ENCODE measurements at regions of chrX and their contacts with region 1.

Region 1: GRCh38 chrX:103817502-103817901 is 14.6 kb downstream of the RAB9B start:
- DNase-seq: peak in 7 of 9 donors; percentile 33 to 62 (median 51)
- ATAC-seq: peak; percentile 77
- H3K4me3 ChIP-seq: no peak overlapping the region
- H3K4me3 Mint-ChIP-seq: no peak overlapping the region
- H3K27ac ChIP-seq: no peak overlapping the region
- H3K27ac Mint-ChIP-seq: no peak overlapping the region
- H3K4me1 ChIP-seq: no peaks in the 10 kb centered on the region
- H3K4me1 Mint-ChIP-seq: no peaks in the 10 kb centered on the region
- H3K27me3 ChIP-seq: no peaks in the 10 kb centered on the region
- H3K27me3 Mint-ChIP-seq: peaks cover 0 to 26% (median 8%) of the 10 kb centered on the region in 5 donors

Region 2: DNA sequence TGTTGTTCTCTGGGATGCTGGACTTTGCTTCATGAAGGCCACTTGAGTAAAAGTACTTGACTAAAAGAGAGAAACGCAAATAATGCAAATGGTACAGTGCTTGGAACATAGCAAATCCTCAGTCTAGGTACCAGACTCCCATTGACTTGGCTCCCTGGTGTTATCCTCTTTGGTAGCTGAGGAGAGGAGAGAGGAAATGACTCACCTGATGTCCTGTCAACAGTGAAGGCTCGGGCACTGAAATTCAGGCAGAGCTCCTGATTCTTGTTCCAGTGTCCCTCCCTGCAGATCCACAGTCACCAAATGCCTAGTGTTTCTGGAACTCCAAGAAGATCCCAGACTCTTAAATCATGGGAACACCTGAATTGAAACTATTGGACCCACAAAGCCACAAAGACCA is 254.7 kb before region 1 on chrX:
- CTCF ChIA-PET with region 1: no interaction called
- POLR2A ChIA-PET with region 1: no interaction called
- intact Hi-C with region 1: no loop called
- DNase-seq: no peak
- ATAC-seq: no peak
- H3K4me3 ChIP-seq: no peak overlapping the region
- H3K4me3 Mint-ChIP-seq: no peak overlapping the region
- H3K27ac ChIP-seq: no peak overlapping the region
- H3K27ac Mint-ChIP-seq: no peak overlapping the region
- H3K4me1 ChIP-seq: no peaks in the 10 kb centered on the region
- H3K4me1 Mint-ChIP-seq: no peaks in the 10 kb centered on the region
- H3K27me3 ChIP-seq: no peaks in the 10 kb centered on the region
- H3K27me3 Mint-ChIP-seq: peaks cover 0 to 9% (median 4%) of the 10 kb centered on the region in 5 donors

Region 3: GRCh38 chrX:103573208-103573607 is 244.3 kb before region 1 on chrX:
- CTCF ChIA-PET with region 1: no interaction called
- POLR2A ChIA-PET with region 1: no interaction called
- intact Hi-C with region 1: no loop called
- DNase-seq: no peak
- ATAC-seq: no peak
- H3K4me3 ChIP-seq: no peak overlapping the region
- H3K4me3 Mint-ChIP-seq: no peak overlapping the region
- H3K27ac ChIP-seq: no peak overlapping the region
- H3K27ac Mint-ChIP-seq: no peak overlapping the region
- H3K4me1 ChIP-seq: no peaks in the 10 kb centered on the region
- H3K4me1 Mint-ChIP-seq: no peaks in the 10 kb centered on the region
- H3K27me3 ChIP-seq: no peaks in the 10 kb centered on the region
- H3K27me3 Mint-ChIP-seq: peaks cover 0 to 13% (median 3%) of the 10 kb centered on the region in 5 donors

Region 4: DNA sequence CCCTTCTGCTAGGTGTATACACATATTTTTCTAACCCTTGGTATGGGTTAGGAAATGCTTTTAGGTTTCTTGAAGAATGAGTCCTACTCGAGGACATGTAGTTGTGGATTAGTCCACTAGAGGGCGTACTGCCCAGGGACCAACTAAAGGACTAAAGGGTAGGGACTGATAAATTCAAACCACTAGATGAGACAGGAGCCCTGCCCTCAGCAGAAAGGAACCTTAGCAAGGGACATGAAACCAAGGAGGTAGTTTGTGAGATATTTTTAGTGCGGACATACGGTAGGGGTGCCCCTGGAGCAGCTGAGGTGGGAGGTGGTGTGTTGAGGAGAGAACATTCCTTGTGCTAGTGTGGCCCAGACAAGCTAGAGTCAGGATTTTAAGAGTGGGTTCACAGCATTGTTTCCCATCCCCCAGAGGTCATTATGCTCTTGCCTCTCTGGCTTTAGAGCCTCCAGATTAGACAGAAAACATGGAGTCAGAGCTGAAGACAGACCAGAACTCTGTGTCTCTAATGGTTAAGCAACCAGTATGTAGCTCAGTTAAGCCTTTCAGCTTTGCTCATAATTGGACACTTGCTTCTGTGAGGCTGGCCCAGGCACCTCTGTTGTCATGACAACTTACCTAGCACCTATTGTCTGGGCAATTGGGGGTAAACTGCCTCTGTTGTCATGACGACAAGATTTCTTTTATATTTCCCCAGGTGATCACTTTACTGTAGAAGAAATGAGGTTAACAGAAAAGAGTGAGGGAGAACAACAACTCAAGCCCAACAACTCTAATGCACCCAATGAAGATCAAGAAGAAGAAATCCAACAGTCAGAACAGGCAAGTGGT is 105.8 kb before region 1 on chrX:
- CTCF ChIA-PET with region 1: no interaction called
- POLR2A ChIA-PET with region 1: no interaction called
- intact Hi-C with region 1: loop called (anchors 1 to 5 kb)
- DNase-seq: peak in 7 of 9 donors; percentile 15 to 46 (median 40)
- ATAC-seq: peak; percentile 76
- H3K4me3 ChIP-seq: no peak overlapping the region
- H3K4me3 Mint-ChIP-seq: no peak overlapping the region
- H3K27ac ChIP-seq: no peak overlapping the region
- H3K27ac Mint-ChIP-seq: no peak overlapping the region
- H3K4me1 ChIP-seq: no peaks in the 10 kb centered on the region
- H3K4me1 Mint-ChIP-seq: peaks cover 0 to 3% (median 0%) of the 10 kb centered on the region in 7 donors
- H3K27me3 ChIP-seq: no peaks in the 10 kb centered on the region
- H3K27me3 Mint-ChIP-seq: peaks cover 0 to 3% (median 0%) of the 10 kb centered on the region in 5 donors

Region 5: DNA sequence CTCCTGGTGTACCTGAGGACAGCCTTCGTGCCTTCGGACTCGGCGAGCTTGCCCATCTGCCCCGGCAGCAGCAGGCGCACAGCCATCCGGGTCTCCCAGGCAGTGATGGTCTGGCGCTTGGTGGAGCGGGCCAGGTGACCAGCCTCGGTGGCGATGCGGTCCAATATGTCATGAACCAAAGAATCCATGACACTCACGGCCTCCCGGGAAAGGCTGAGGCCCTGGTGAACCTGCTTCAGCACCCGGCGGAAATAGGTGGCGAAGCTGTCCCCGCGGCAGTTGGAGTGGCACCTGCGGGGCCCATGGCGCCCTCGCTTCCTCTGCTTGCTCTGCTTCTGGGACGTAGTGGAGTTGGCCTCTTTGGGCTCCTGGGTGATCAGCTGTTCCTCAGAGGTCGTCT is 195.7 kb after region 1 on chrX:
- CTCF ChIA-PET with region 1: no interaction called
- POLR2A ChIA-PET with region 1: no interaction called
- intact Hi-C with region 1: no loop called
- DNase-seq: no peak
- ATAC-seq: no peak
- H3K4me3 ChIP-seq: no peak overlapping the region
- H3K4me3 Mint-ChIP-seq: no peak overlapping the region
- H3K27ac ChIP-seq: no peak overlapping the region
- H3K27ac Mint-ChIP-seq: no peak overlapping the region
- H3K4me1 ChIP-seq: no peaks in the 10 kb centered on the region
- H3K4me1 Mint-ChIP-seq: no peaks in the 10 kb centered on the region
- H3K27me3 ChIP-seq: no peaks in the 10 kb centered on the region
- H3K27me3 Mint-ChIP-seq: peaks cover 0 to 3% (median 0%) of the 10 kb centered on the region in 5 donors